Heart left ventricle (tissue), 16 donors: ENCODE measurements at regions of chr6 and their contacts with region 1.

Region 1: GRCh38 chr6:32744776-32745175 is 3.6 kb downstream of the HLA-DQA2 start:
- DNase-seq: no peak
- ATAC-seq: no peak
- H3K4me3 ChIP-seq: no peak overlapping the region
- H3K27ac ChIP-seq: no peak overlapping the region
- H3K4me1 ChIP-seq: no peaks in the 10 kb centered on the region
- H3K27me3 ChIP-seq: peaks cover 0 to 65% (median 5%) of the 10 kb centered on the region in 9 donors
- CTCF ChIP-seq: no peak
- POLR2A ChIP-seq: no peak

Region 2: DNA sequence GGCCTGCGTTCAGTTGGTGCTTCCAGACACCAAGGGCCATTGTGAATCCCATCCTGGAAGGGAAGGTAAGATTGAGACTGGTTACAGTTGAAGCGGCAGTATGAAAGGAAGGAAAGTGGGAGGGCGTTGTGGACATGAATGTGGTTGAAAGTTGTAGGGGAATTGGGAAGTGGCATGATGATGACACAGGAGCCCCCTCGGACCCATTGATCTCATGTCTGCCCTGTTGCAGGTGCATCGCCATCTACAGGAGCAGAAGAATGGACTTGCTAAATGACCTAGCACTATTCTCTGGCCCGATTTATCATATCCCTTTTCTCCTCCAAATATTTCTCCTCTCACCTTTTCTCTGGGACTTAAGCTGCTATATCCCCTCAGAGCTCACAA is 102.1 kb before region 1 on chr6:
- intact Hi-C with region 1: loop called in 1 of 10 experiments (anchors 5 kb)
- DNase-seq: no peak
- ATAC-seq: no peak
- H3K4me3 ChIP-seq: no peak overlapping the region
- H3K27ac ChIP-seq: no peak overlapping the region
- H3K4me1 ChIP-seq: no peaks in the 10 kb centered on the region
- H3K27me3 ChIP-seq: no peaks in the 10 kb centered on the region
- CTCF ChIP-seq: no peak
- POLR2A ChIP-seq: no peak

Region 3: DNA sequence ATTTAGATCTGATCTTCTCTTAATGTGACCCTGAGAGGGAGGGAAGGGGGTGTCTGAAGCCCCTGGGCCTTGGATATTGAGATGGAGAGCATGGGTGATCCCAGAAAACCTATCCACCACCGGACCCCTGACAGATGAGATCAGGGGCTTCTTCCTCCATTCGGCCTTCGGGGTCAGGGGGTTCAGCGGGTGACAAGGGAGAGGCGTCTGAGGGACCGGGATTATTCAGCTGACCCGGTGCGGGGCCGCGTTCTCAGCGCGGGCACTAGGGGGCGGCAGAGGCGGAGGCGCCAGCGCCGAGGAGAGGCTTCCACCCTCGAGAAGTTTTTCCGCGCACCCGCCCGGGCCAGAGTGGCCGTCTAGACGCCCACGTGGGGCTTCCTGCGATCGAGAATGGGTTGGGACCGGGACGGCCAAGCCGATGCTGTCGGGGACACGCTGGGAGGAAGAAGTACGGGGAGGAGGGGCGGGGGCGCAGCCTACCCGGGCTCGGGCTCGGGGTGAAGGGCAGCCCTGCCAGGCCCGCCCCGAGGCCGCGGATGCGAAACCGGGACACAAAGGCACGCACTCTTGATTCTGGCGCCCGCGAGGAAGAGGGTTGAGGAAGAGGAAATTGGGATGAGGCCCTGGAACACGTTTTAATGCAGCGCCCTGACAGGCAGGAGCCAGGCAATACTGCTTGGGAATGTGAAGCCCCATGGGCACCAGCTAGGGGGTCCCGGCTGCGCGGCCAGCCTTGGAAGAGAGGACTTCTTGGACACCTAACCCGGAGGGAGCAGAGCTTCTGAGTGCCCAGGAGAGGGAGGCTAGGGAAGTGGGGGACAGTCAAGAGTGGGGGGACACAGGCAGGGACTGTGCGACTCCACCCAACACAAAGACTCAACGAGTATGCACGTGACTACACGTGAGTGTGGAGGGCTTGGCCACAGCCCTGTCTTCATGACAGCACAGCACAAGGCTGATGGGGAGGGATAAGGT is 416.9 kb after region 1 on chr6:
- intact Hi-C with region 1: no loop called
- DNase-seq: peak; percentile 84 to 92 (median 86)
- ATAC-seq: peak; percentile 38 to 94 (median 88)
- H3K4me3 ChIP-seq: peak overlapping the region in 11 of 12 donors; percentile 34 to 64 (median 52)
- H3K27ac ChIP-seq: peak overlapping the region in 8 of 12 donors; percentile 37 to 56 (median 54)
- H3K4me1 ChIP-seq: peaks cover 0 to 21% (median 10%) of the 10 kb centered on the region in 12 donors
- H3K27me3 ChIP-seq: no peaks in the 10 kb centered on the region
- CTCF ChIP-seq: peak; percentile 89 to 99 (median 94)
- POLR2A ChIP-seq: no peak